Activated CD4-positive, alpha-beta T cell treated with anti-CD3 and anti-CD28 coated beads for 36 hours (primary cell): ENCODE measurements at regions of chrX and their contacts with region 1.

Region 1: DNA sequence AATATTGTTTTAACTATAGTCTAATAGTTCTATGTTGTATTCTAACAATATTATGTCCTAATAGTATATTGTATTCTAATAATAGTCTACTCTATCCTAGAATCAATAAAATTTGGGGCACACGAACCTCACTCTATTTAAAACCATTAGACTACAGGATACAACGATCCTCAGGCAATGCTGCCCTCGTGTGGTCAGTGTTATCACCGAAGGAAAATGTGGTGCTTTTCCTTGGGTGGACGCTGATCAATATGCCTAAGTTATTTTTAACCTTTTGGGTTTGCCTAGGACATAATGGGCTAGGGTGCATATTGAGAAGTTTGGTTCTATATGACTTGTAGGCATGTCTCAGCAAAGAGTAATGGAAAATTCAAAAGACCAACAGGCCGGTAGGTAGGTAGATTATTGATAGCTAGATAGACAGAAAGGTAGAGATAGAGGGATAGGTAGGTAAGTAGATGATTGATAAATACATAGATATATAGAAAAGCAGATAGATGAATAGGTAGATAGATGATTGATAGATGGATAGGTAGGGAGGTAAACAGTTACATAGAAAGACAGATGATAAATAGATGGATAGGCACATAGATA is 75.1 kb downstream of the PRKX start:
- DNase-seq: peak; percentile 53
- ATAC-seq: no peak
- H3K4me3 Mint-ChIP-seq: no peak overlapping the region
- H3K27ac Mint-ChIP-seq: no peak overlapping the region
- H3K4me1 Mint-ChIP-seq: no peaks in the 10 kb centered on the region
- H3K27me3 Mint-ChIP-seq: no peaks in the 10 kb centered on the region

Region 2: DNA sequence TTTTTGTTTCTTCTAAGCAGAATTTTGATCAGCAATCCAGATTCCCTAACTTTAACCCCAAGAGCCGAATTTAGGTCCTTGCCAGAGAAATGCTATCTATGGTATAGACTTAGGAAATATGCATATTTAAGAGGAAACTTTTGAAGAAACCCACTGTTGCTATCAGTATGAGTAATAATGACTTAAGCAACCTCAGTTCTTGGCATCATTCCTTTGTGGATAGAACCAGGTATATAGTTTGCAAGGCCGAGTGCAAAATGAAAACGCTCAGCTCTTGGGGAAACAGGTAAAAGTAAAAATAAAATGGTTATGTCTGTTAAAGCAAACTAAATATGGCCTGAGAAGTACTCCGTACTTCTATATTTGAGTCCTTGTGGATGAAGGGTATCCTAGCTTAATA is 519.0 kb before region 1 on chrX:
- CTCF ChIA-PET with region 1: no interaction called
- POLR2A ChIA-PET with region 1: no interaction called
- intact Hi-C with region 1: loop called in 1 of 2 experiments (anchors 5 kb)
- DNase-seq: no peak
- ATAC-seq: no peak
- H3K4me3 Mint-ChIP-seq: no peak overlapping the region
- H3K27ac Mint-ChIP-seq: no peak overlapping the region
- H3K4me1 Mint-ChIP-seq: no peaks in the 10 kb centered on the region
- H3K27me3 Mint-ChIP-seq: no peaks in the 10 kb centered on the region